PC-9 (cell line): ENCODE measurements at regions of chr7 and their contacts with region 1.

Region 1: DNA sequence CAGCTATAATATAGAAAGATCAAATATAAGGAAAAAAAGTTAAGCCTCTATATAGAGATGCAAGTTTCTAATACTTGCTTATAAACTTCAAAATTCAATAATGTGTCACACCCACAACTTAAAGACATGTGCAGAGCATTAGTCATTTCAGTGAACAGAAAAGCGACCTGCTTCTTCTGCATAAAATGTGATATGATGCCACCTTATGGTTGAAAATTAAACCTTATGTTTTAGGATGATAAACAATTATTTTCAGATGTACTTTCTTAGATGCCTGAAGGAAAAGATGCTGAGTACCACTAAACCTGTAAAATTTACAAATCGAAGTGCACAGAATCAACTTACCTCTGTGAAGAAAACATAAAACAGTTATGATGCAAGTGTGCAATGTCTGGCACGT is 96.0 kb downstream of the MTERF1 start:
- DNase-seq: peak in 1 of 2 experiments; percentile 65
- H3K4me3 ChIP-seq: no peak overlapping the region
- H3K27ac ChIP-seq: no peak overlapping the region
- H3K4me1 ChIP-seq: no peaks in the 10 kb centered on the region
- H3K27me3 ChIP-seq: no peaks in the 10 kb centered on the region
- CTCF ChIP-seq: peak; percentile 70

Region 2: GRCh38 chr7:90788052-90788451 is 996.4 kb before region 1 on chr7:
- CTCF ChIA-PET with region 1: interaction called, 11 read pairs
- POLR2A ChIA-PET with region 1: no interaction called
- intact Hi-C with region 1: no loop called
- DNase-seq: no peak
- H3K4me3 ChIP-seq: no peak overlapping the region
- H3K27ac ChIP-seq: no peak overlapping the region
- H3K4me1 ChIP-seq: no peaks in the 10 kb centered on the region
- H3K27me3 ChIP-seq: no peaks in the 10 kb centered on the region
- CTCF ChIP-seq: no peak

Region 3: DNA sequence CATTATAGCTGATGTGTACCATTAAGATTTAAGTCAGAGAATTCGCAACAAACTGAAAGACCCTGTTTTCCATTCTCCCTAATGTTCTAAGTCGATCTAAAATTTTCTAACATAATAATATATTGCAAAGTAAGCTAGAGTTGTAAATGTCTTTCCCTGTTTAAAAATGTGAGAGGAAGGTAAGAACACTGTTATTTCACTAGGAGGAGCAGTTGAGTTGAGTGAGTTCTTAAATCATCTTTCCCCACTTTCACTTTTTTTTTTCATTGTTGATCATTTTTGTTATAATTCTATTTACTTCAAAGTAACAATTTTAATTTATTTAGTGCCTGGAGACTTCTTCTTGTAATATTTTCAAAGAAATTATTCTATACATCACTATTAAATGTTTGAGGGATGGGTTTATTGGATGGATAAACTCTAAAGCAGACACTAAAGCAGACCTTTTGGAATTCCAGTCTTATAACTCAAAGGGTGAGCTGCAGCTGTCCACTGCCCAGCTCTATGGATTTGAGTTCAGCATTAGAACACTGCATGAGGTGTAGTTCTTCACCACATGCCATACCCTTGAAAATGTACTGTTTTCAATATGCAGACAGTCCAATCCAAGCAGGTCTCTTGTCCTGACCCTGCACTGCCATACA is 701.5 kb before region 1 on chr7:
- CTCF ChIA-PET with region 1: interaction called, 3 read pairs
- POLR2A ChIA-PET with region 1: no interaction called
- intact Hi-C with region 1: loop called (anchors 1 kb)
- DNase-seq: no peak
- H3K4me3 ChIP-seq: no peak overlapping the region
- H3K27ac ChIP-seq: no peak overlapping the region
- H3K4me1 ChIP-seq: no peaks in the 10 kb centered on the region
- H3K27me3 ChIP-seq: no peaks in the 10 kb centered on the region
- CTCF ChIP-seq: peak; percentile 62

Region 4: DNA sequence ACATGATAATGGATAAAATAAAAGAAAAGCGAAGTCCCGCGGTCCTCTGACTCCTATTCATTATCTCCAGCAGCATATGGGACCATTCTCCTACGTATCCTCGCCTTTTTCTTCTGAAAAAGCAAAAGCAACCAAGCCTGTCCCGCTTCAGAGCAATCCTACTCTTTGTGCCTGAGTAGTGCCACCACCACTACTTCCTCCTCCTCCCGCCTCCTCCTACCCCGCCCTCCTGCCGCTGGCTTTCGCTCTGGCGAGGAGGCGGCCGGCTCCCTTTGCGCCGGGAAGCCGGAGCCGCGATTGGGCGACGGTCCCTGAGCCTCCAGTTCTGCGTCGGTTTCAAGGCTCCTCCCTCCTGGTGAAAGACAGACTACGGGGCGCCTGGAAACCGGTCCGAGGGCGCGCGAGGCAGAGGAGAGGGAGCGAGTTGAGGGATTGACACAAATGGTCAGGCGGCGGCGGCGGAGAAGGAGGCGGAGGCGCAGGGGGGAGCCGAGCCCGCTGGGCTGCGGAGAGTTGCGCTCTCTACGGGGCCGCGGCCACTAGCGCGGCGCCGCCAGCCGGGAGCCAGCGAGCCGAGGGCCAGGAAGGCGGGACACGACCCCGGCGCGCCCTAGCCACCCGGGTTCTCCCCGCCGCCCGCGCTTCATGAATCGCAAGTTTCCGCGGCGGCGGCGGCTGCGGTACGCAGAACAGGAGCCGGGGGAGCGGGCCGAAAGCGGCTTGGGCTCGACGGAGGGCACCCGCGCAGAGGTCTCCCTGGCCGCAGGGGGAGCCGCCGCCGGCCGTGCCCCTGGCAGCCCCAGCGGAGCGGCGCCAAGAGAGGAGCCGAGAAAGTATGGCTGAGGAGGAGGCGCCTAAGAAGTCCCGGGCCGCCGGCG is 520.2 kb before region 1 on chr7 and contains the start of gene FZD1:
- CTCF ChIA-PET with region 1: no interaction called
- POLR2A ChIA-PET with region 1: no interaction called
- intact Hi-C with region 1: loop called (anchors 5 kb)
- DNase-seq: peak; percentile 87 to 98
- H3K4me3 ChIP-seq: peak within 1 kb of the TSS; percentile 60
- H3K27ac ChIP-seq: no peak within 1 kb of the TSS
- H3K4me1 ChIP-seq: 0 out of 2 replicates have a peak, but pooled peaks cover 6% of the 10 kb centered on the region
- H3K27me3 ChIP-seq: peaks cover 17% of the 10 kb centered on the region; the same call in 1 of the 2 replicates
- CTCF ChIP-seq: no peak
- total RNA-seq, gene FZD1: 2.6 and 2.8 TPM in 2 replicates

Region 5: DNA sequence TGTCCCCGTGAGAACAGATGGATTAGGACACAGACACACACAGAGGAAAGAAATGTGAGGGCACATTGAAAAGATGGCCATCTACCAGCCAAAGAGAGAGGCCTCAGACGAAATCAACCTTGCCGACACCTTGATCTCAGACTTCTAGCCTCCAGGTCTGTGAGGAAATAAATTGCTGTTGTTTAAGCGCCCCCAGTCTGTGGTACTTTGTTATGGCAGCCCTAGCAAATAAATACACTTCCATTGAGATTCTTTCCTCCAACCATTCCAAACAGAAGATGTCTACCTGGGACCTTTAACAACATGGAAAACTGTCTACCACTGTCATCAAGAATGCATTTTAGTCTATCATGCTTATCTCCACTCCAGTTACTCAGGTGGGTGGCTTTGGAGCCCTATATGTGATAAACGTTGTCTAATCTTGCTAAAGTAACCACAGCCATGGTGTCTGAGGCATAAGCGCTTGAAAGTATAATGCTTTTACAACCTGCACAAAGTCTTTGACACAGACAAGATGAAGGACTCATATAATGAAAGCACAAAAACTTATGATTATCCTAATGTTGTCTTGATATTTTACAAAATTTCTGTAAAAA is 148.2 kb before region 1 on chr7:
- CTCF ChIA-PET with region 1: no interaction called
- POLR2A ChIA-PET with region 1: no interaction called
- intact Hi-C with region 1: loop called (anchors 2 kb)
- DNase-seq: peak in 1 of 2 experiments; percentile 35
- H3K4me3 ChIP-seq: no peak overlapping the region
- H3K27ac ChIP-seq: no peak overlapping the region
- H3K4me1 ChIP-seq: no peaks in the 10 kb centered on the region
- H3K27me3 ChIP-seq: no peaks in the 10 kb centered on the region
- CTCF ChIP-seq: peak; percentile 57

Region 6: GRCh38 chr7:91800389-91800788 is 15.9 kb after region 1 on chr7:
- CTCF ChIA-PET with region 1: no interaction called
- POLR2A ChIA-PET with region 1: no interaction called
- intact Hi-C with region 1: no loop called
- DNase-seq: no peak
- H3K4me3 ChIP-seq: no peak overlapping the region
- H3K27ac ChIP-seq: no peak overlapping the region
- H3K4me1 ChIP-seq: no peaks in the 10 kb centered on the region
- H3K27me3 ChIP-seq: no peaks in the 10 kb centered on the region
- CTCF ChIP-seq: no peak

Region 7: GRCh38 chr7:91866599-91867148 is 82.2 kb after region 1 on chr7:
- CTCF ChIA-PET with region 1: no interaction called
- POLR2A ChIA-PET with region 1: no interaction called
- intact Hi-C with region 1: no loop called
- DNase-seq: no peak
- H3K4me3 ChIP-seq: no peak overlapping the region
- H3K27ac ChIP-seq: no peak overlapping the region
- H3K4me1 ChIP-seq: no peaks in the 10 kb centered on the region
- H3K27me3 ChIP-seq: no peaks in the 10 kb centered on the region
- CTCF ChIP-seq: no peak